PC-3 (cell line): ENCODE measurements at regions of chr4 and their contacts with region 1.

Region 1: GRCh38 chr4:64105903-64106302 is 303.3 kb downstream of the TECRL start:
- DNase-seq: no peak
- ATAC-seq: no peak
- H3K4me3 ChIP-seq: no peak overlapping the region
- H3K27ac ChIP-seq: no peak overlapping the region
- H3K4me1 ChIP-seq: no peaks in the 10 kb centered on the region
- H3K27me3 ChIP-seq: no peaks in the 10 kb centered on the region
- CTCF ChIP-seq: no peak

Region 2: GRCh38 chr4:63919636-63920365 is 186.1 kb before region 1 on chr4:
- CTCF ChIA-PET with region 1: no interaction called
- POLR2A ChIA-PET with region 1: no interaction called
- intact Hi-C with region 1: loop called (anchors 5 kb)
- DNase-seq: peak; percentile 9
- ATAC-seq: no peak; the same call in 1 of the 2 replicates
- H3K4me3 ChIP-seq: no peak overlapping the region
- H3K27ac ChIP-seq: no peak overlapping the region
- H3K4me1 ChIP-seq: no peaks in the 10 kb centered on the region
- H3K27me3 ChIP-seq: no peaks in the 10 kb centered on the region
- CTCF ChIP-seq: no peak

Region 3: GRCh38 chr4:64216741-64217140 is 110.8 kb after region 1 on chr4:
- CTCF ChIA-PET with region 1: no interaction called
- POLR2A ChIA-PET with region 1: no interaction called
- intact Hi-C with region 1: no loop called
- DNase-seq: no peak
- ATAC-seq: no peak
- H3K4me3 ChIP-seq: no peak overlapping the region
- H3K27ac ChIP-seq: no peak overlapping the region
- H3K4me1 ChIP-seq: no peaks in the 10 kb centered on the region
- H3K27me3 ChIP-seq: no peaks in the 10 kb centered on the region
- CTCF ChIP-seq: no peak